K562 (cell line): ENCODE measurements at regions of chr1 and their contacts with region 1.

Region 1: GRCh38 chr1:29341936-29342335 is 105.6 kb downstream of the PTPRU start:
- DNase-seq: peak in 1 of 4 experiments; percentile 9
- ATAC-seq: peak; percentile 56; the same call in 1 of the 3 replicates
- H3K4me3 ChIP-seq: no peak overlapping the region
- H3K27ac ChIP-seq: no peak overlapping the region
- H3K4me1 ChIP-seq: no peaks in the 10 kb centered on the region
- H3K27me3 ChIP-seq: peaks cover 16 to 29% of the 10 kb centered on the region in 2 experiments; a peak in 4 of 5 replicates
- CTCF ChIP-seq: peak in 2 of 3 experiments; percentile 20 to 45; a peak in 3 of 6 replicates
- EP300 ChIP-seq: no peak
- POLR2A ChIP-seq: no peak
- RAD21 ChIP-seq: peak in 1 of 2 experiments; percentile 35; a peak in 2 of 4 replicates

Region 2: GRCh38 chr1:29410476-29410875 is 68.5 kb after region 1 on chr1:
- CTCF ChIA-PET with region 1: no interaction called
- POLR2A ChIA-PET with region 1: no interaction called
- in situ Hi-C with region 1: no loop called
- intact Hi-C with region 1: loop called (anchors 5 kb)
- DNase-seq: no peak
- ATAC-seq: no peak
- H3K4me3 ChIP-seq: no peak overlapping the region
- H3K27ac ChIP-seq: no peak overlapping the region
- H3K4me1 ChIP-seq: no peaks in the 10 kb centered on the region
- H3K27me3 ChIP-seq: peaks cover 0 to 14% of the 10 kb centered on the region in 2 experiments; a peak in 1 of 5 replicates
- CTCF ChIP-seq: no peak
- EP300 ChIP-seq: no peak
- POLR2A ChIP-seq: no peak
- RAD21 ChIP-seq: no peak